Activated naive CD4-positive, alpha-beta T cell treated with anti-CD3 and anti-CD28 coated beads for 36 hours (primary cell): ENCODE measurements at regions of chr12 and their contacts with region 1.

Region 1: GRCh38 chr12:51047655-51048540 is at the start of gene LETMD1:
- DNase-seq: peak; percentile 95
- H3K4me3 Mint-ChIP-seq: peak within 1 kb of the TSS; percentile 93
- H3K27ac Mint-ChIP-seq: peak within 1 kb of the TSS; percentile 93
- H3K4me1 Mint-ChIP-seq: peaks cover 34% of the 10 kb centered on the region
- H3K27me3 Mint-ChIP-seq: no peaks in the 10 kb centered on the region
- total RNA-seq, gene LETMD1: 88.7 to 89.0 TPM

Region 2: GRCh38 chr12:51083126-51083833 is 35.4 kb after region 1 on chr12 and contains the start of gene CSRNP2:
- CTCF ChIA-PET with region 1: interaction called, 7 read pairs
- intact Hi-C with region 1: loop called (anchors 1 kb)
- DNase-seq: peak; percentile 96
- H3K4me3 Mint-ChIP-seq: peak within 1 kb of the TSS; percentile 94
- H3K27ac Mint-ChIP-seq: peak within 1 kb of the TSS; percentile 70
- H3K4me1 Mint-ChIP-seq: peaks cover 35% of the 10 kb centered on the region
- H3K27me3 Mint-ChIP-seq: no peaks in the 10 kb centered on the region
- total RNA-seq, gene CSRNP2: 8.4 to 11.0 TPM

Region 3: GRCh38 chr12:51172515-51173431 is 124.9 kb after region 1 on chr12 and contains the start of gene TFCP2:
- CTCF ChIA-PET with region 1: no interaction called
- intact Hi-C with region 1: loop called (anchors 1 kb)
- DNase-seq: peak; percentile 96
- H3K4me3 Mint-ChIP-seq: peak within 1 kb of the TSS; percentile 66
- H3K27ac Mint-ChIP-seq: peak within 1 kb of the TSS; percentile 66
- H3K4me1 Mint-ChIP-seq: peaks cover 14% of the 10 kb centered on the region
- H3K27me3 Mint-ChIP-seq: no peaks in the 10 kb centered on the region
- total RNA-seq, gene TFCP2: 23.6 to 25.4 TPM

Region 4: GRCh38 chr12:51217968-51218606 is 170.2 kb after region 1 on chr12 and contains the start of gene POU6F1:
- CTCF ChIA-PET with region 1: interaction called, 8 read pairs
- intact Hi-C with region 1: loop called (anchors 1 kb)
- DNase-seq: peak; percentile 72
- H3K4me3 Mint-ChIP-seq: peak within 1 kb of the TSS; percentile 75
- H3K27ac Mint-ChIP-seq: peak within 1 kb of the TSS; percentile 84
- H3K4me1 Mint-ChIP-seq: peaks cover 15% of the 10 kb centered on the region
- H3K27me3 Mint-ChIP-seq: no peaks in the 10 kb centered on the region
- total RNA-seq, gene POU6F1: 7.8 TPM

Region 5: DNA sequence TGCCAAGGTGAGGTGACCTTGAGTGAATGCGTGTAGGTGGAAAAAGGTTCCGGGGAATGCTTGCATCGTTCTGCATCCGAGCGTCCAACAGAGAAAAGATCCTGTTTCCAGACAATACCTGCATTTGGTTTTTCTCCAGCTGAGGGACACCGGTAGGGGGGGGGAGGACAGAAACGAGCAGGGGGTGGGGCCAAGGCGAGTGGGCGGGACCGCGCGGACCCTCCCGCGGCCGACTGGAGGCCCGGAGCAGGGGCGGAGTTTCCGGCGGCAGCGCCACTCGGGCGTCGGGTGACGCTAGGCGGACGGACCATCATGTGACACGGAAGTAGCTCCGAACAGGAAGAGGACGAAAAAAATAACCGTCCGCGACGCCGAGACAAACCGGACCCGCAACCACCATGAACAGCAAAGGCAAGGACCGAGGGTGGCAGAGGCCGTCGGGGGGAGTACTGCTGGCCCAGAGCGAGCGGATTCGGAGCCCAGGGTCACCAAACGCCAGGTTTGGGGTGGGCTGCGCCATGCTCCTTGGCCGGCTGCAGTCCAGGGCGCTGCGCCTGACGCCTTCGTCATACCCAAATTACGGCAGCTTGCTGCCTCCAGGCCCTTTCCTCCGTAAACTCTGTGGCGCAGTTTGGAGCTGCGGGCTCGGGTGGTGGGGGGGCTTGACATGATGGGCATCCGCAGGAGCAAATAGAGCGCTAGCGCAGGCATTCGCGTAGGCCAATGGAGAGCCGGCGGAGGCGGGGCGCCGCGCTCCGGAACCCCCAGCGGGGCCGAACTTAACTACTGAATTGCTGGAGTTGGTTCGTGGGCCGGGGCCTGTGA is 190.8 kb after region 1 on chr12 and contains the start of gene DAZAP2:
- CTCF ChIA-PET with region 1: no interaction called
- intact Hi-C with region 1: loop called (anchors 1 kb)
- DNase-seq: peak; percentile 96
- H3K4me3 Mint-ChIP-seq: peak within 1 kb of the TSS; percentile 96
- H3K27ac Mint-ChIP-seq: peak within 1 kb of the TSS; percentile 99
- H3K4me1 Mint-ChIP-seq: peaks cover 37% of the 10 kb centered on the region
- H3K27me3 Mint-ChIP-seq: no peaks in the 10 kb centered on the region
- total RNA-seq, gene DAZAP2: 106 to 107 TPM

Region 6: DNA sequence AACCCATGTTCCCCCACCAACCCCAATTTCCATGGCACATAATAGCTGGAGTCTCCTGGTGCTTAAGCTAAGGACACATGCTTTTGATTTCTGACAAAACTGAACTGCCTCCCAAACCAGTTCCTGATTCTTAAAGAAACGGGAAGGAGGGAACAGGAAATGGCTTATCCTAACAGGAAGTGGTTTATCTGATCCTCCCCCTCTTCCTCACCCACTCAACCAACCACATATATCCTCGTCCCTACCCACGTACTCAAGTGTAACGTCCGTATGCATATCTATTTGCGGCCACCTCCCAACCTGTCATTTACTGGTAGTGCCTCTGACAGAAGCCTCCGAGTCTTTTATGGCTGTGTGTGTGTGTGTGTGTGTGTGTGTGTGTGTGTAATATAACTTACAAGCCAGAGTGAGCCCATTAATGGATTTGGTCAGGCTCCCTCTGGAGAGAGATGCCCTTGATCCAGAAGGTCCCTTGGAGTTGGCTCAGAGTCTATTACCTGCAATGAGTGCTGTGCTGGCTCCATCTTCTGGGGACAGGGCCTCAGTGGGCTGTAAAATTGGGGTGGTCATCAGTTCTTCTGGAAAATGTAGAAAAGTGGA is 198.5 kb after region 1 on chr12:
- CTCF ChIA-PET with region 1: no interaction called
- intact Hi-C with region 1: loop called (anchors 2 kb)
- DNase-seq: peak; percentile 68
- H3K4me3 Mint-ChIP-seq: peak overlapping the region; percentile 2
- H3K27ac Mint-ChIP-seq: peak overlapping the region; percentile 80
- H3K4me1 Mint-ChIP-seq: peaks cover 56% of the 10 kb centered on the region
- H3K27me3 Mint-ChIP-seq: no peaks in the 10 kb centered on the region

Region 7: GRCh38 chr12:51270067-51270970 is 222.4 kb after region 1 on chr12 and contains the start of gene SMAGP:
- CTCF ChIA-PET with region 1: no interaction called
- intact Hi-C with region 1: loop called (anchors 1 kb)
- DNase-seq: peak; percentile 51
- H3K4me3 Mint-ChIP-seq: peak within 1 kb of the TSS; percentile 83
- H3K27ac Mint-ChIP-seq: no peak within 1 kb of the TSS
- H3K4me1 Mint-ChIP-seq: peaks cover 20% of the 10 kb centered on the region
- H3K27me3 Mint-ChIP-seq: peaks cover 8% of the 10 kb centered on the region
- total RNA-seq, gene SMAGP: 0.54 to 1.2 TPM

Region 8: GRCh38 chr12:51460519-51460918 is 412.6 kb after region 1 on chr12:
- CTCF ChIA-PET with region 1: no interaction called
- intact Hi-C with region 1: no loop called
- DNase-seq: no peak
- H3K4me3 Mint-ChIP-seq: no peak overlapping the region
- H3K27ac Mint-ChIP-seq: no peak overlapping the region
- H3K4me1 Mint-ChIP-seq: no peaks in the 10 kb centered on the region
- H3K27me3 Mint-ChIP-seq: no peaks in the 10 kb centered on the region